ENCODE measurements at regions of chr12 and their contacts with region 1.

Region 1: GRCh38 chr12:68807576-68808387 is at the start of gene MDM2:
- DNase-seq: peak; percentile 93
- H3K4me3 ChIP-seq: peak within 1 kb of the TSS; percentile 84 to 99
- H3K27ac ChIP-seq: peak within 1 kb of the TSS; percentile 98 to 99
- H3K4me1 ChIP-seq: peaks cover 6% of the 10 kb centered on the region
- H3K27me3 ChIP-seq: no peaks in the 10 kb centered on the region
- CTCF ChIP-seq: peak; percentile 65 to 95 (median 86)
- POLR2A ChIP-seq: peak; percentile 91
- total RNA-seq, gene MDM2: 36.1 to 95.6 TPM

Region 2: GRCh38 chr12:68745904-68746571 is 61.7 kb before region 1 on chr12 and contains the start of gene SLC35E3:
- intact Hi-C with region 1: loop called (anchors 2 kb)
- DNase-seq: peak; percentile 90
- H3K4me3 ChIP-seq: peak within 1 kb of the TSS; percentile 58 to 76
- H3K27ac ChIP-seq: peak within 1 kb of the TSS; percentile 69 to 77
- H3K4me1 ChIP-seq: peaks cover 4% of the 10 kb centered on the region
- H3K27me3 ChIP-seq: no peaks in the 10 kb centered on the region
- CTCF ChIP-seq: no peak
- POLR2A ChIP-seq: peak; percentile 77
- total RNA-seq, gene SLC35E3: 8.9 to 10.3 TPM